Pancreas (tissue), 10 donors: ENCODE measurements at regions of chr2 and their contacts with region 1.

Region 1: DNA sequence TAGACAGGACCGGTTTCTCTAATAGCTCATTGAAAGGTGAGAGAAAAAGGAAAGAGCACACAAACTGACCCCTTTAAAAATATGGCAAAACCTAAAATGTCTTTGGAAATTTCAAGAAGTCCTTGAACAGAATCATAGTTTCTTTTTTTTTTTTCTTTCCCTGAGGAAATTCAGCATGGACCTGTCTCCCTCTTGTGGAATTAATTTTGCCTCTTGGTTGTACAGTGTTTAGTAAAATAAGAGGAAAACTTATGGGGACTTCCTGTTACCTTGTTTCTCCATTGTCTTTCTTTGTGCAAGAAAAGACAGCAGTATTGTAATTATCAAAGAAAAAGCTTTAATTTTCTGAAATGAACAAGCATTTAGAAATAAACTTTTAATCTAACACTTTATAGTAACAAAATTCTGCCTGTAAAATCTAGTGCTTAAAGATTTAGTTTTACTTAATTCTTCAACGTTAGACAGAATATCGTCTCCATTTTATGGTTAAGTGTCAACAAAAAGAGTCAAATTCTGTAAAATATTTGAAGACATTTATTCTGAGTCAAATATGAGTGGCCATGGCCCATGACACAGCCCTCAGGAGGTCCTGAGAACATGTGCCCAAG is 176.3 kb upstream of the NABP1 start:
- DNase-seq: no peak
- ATAC-seq: peak; percentile 71 to 89 (median 82)
- H3K4me3 ChIP-seq: no peak overlapping the region
- H3K27ac ChIP-seq: peak overlapping the region in 2 of 4 donors; percentile 13 to 30
- H3K4me1 ChIP-seq: peaks cover 12 to 23% (median 18%) of the 10 kb centered on the region in 3 donors
- H3K27me3 ChIP-seq: no peaks in the 10 kb centered on the region
- CTCF ChIP-seq: peak in 3 of 4 donors; percentile 49 to 60 (median 50)

Region 2: GRCh38 chr2:190216829-190217228 is 1284.8 kb before region 1 on chr2:
- intact Hi-C with region 1: no loop called
- DNase-seq: peak in 4 of 6 donors; percentile 34 to 84 (median 68)
- ATAC-seq: peak in 1 of 4 donors; percentile 30
- H3K4me3 ChIP-seq: no peak overlapping the region
- H3K27ac ChIP-seq: no peak overlapping the region
- H3K4me1 ChIP-seq: no peaks in the 10 kb centered on the region
- H3K27me3 ChIP-seq: no peaks in the 10 kb centered on the region
- CTCF ChIP-seq: no peak

Region 3: GRCh38 chr2:191165176-191165643 is 336.5 kb before region 1 on chr2:
- intact Hi-C with region 1: loop called in 1 of 3 experiments (anchors 5 kb)
- DNase-seq: no peak
- ATAC-seq: peak; percentile 81 to 90 (median 88)
- H3K4me3 ChIP-seq: no peak overlapping the region
- H3K27ac ChIP-seq: peak overlapping the region in 1 of 4 donors; percentile 45
- H3K4me1 ChIP-seq: peaks cover 0 to 21% (median 8%) of the 10 kb centered on the region in 3 donors
- H3K27me3 ChIP-seq: no peaks in the 10 kb centered on the region
- CTCF ChIP-seq: peak; percentile 14 to 50 (median 40)

Region 4: DNA sequence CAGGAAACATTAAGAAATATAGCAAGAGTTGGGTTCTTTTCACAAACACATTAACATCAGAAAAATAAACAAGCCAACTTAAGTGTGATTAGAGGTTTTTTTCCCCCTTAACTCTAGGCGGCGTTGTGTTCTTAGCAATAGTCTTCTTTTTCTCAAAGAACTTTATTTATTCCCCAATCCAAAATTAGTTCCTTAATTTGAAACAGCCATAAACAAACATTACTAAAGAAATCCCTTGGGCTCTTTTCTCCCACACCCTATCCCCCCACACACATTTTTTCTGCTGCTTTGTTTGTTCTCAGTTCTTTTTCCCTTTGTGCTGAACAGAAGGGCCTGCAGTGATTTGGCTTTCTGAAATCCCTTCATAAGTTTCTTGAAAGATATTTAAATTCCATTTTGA is 269.7 kb before region 1 on chr2:
- intact Hi-C with region 1: loop called in 2 of 3 experiments (anchors 10 kb)
- DNase-seq: no peak
- ATAC-seq: peak in 1 of 4 donors; percentile 42
- H3K4me3 ChIP-seq: no peak overlapping the region
- H3K27ac ChIP-seq: no peak overlapping the region
- H3K4me1 ChIP-seq: peaks cover 0 to 7% (median 0%) of the 10 kb centered on the region in 3 donors
- H3K27me3 ChIP-seq: no peaks in the 10 kb centered on the region
- CTCF ChIP-seq: no peak

Region 5: DNA sequence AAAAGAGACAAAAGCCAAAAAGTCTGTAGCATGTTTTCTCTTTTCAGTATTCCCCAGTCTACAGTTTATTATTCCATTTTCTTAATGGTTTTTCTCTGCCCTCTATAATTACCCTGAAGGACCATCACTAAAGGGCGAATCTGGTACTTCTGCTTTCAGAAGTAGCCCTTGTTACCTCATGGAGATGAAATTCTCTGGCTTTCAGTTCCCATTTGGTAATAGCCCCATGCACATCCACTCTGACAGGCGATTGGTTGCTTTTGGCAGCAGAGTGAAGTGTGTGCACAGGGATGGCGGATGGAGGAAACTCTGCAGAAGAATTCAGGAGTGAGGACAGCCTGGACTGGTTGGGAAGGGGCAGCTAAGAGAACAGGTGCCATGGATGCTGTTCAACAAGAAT is 109.9 kb after region 1 on chr2:
- intact Hi-C with region 1: no loop called
- DNase-seq: no peak
- ATAC-seq: peak in 2 of 4 donors; percentile 50 to 74
- H3K4me3 ChIP-seq: no peak overlapping the region
- H3K27ac ChIP-seq: no peak overlapping the region
- H3K4me1 ChIP-seq: no peaks in the 10 kb centered on the region
- H3K27me3 ChIP-seq: no peaks in the 10 kb centered on the region
- CTCF ChIP-seq: no peak

Region 6: DNA sequence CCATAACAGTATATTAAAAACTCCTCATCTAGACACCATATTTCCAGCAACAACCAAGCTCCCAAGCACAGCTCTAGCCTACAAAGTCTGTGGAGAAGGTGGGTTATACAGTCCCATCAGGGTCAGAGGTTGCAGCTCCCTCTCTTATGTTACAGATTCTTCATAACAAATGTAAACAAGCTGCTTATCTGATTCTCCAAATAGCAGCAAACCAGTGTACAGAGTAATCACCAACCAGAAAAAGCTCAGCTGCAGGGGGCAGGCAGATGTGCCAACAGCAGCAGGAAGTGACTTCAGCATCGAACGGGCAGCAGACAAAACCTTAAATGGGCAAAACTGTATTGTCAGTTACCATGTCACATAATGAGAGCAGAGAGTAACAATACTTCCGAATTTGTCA is 123.4 kb after region 1 on chr2:
- intact Hi-C with region 1: no loop called
- DNase-seq: no peak
- ATAC-seq: peak in 1 of 4 donors; percentile 49
- H3K4me3 ChIP-seq: no peak overlapping the region
- H3K27ac ChIP-seq: no peak overlapping the region
- H3K4me1 ChIP-seq: no peaks in the 10 kb centered on the region
- H3K27me3 ChIP-seq: no peaks in the 10 kb centered on the region
- CTCF ChIP-seq: no peak